Panc1 (cell line): ENCODE measurements at regions of chr13 and their contacts with region 1.

Region 1: GRCh38 chr13:90872491-90873025 is 474.9 kb upstream of the MIR17HG start:
- DNase-seq: no peak
- ATAC-seq: no peak
- H3K4me3 ChIP-seq: no peak overlapping the region
- H3K27ac ChIP-seq: no peak overlapping the region
- H3K4me1 ChIP-seq: no peaks in the 10 kb centered on the region
- H3K27me3 ChIP-seq: no peaks in the 10 kb centered on the region
- CTCF ChIP-seq: no peak

Region 2: GRCh38 chr13:90889906-90890834 is 17.6 kb after region 1 on chr13:
- CTCF ChIA-PET with region 1: no interaction called
- POLR2A ChIA-PET with region 1: no interaction called
- in situ Hi-C with region 1: no loop called
- intact Hi-C with region 1: no loop called
- DNase-seq: no peak
- ATAC-seq: no peak
- H3K4me3 ChIP-seq: no peak overlapping the region
- H3K27ac ChIP-seq: no peak overlapping the region
- H3K4me1 ChIP-seq: no peaks in the 10 kb centered on the region
- H3K27me3 ChIP-seq: no peaks in the 10 kb centered on the region
- CTCF ChIP-seq: no peak

Region 3: DNA sequence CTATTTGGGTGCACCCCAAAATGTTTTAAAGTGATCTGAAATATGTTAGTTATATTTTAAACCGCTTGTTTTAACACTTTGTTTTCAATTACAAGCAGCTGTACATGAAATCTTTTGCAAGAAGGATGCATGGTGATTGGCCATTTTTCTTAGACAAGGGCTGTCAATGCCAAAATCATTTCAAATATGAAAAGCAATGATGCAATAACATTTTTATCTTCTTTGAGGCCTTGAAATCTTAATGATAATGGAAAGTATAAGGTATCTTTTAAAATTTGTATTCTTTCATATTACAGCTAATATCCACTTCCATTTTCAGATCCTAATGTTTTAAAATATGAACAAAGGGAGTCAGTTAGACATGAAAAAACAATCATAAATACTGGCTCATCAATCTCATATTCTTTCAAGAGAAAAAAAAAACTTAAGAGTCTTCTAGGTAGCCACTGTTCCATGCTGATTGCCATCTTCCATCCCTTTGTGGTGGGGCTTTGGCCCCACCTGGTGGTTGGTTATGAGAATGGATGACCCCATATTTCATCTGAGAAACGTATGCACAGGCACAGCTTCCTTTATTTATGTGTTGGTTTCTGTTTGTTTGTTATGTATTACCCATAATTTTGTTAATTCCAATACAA is 144.6 kb after region 1 on chr13:
- CTCF ChIA-PET with region 1: no interaction called
- POLR2A ChIA-PET with region 1: no interaction called
- in situ Hi-C with region 1: no loop called
- intact Hi-C with region 1: loop called (anchors 10 kb)
- DNase-seq: peak; percentile 42
- ATAC-seq: peak; percentile 85
- H3K4me3 ChIP-seq: peak overlapping the region in 1 of 2 experiments; percentile 43; a peak in 3 of 4 replicates
- H3K27ac ChIP-seq: no peak overlapping the region
- H3K4me1 ChIP-seq: no peaks in the 10 kb centered on the region
- H3K27me3 ChIP-seq: no peaks in the 10 kb centered on the region
- CTCF ChIP-seq: peak; percentile 82

Region 4: GRCh38 chr13:92038905-92039304 is 1166.3 kb after region 1 on chr13:
- CTCF ChIA-PET with region 1: no interaction called
- POLR2A ChIA-PET with region 1: no interaction called
- in situ Hi-C with region 1: no loop called
- intact Hi-C with region 1: no loop called
- DNase-seq: no peak
- ATAC-seq: no peak
- H3K4me3 ChIP-seq: no peak overlapping the region
- H3K27ac ChIP-seq: no peak overlapping the region
- H3K4me1 ChIP-seq: no peaks in the 10 kb centered on the region
- H3K27me3 ChIP-seq: no peaks in the 10 kb centered on the region
- CTCF ChIP-seq: no peak